T-cell (primary cell): ENCODE measurements at regions of chr11 and their contacts with region 1.

Region 1: DNA sequence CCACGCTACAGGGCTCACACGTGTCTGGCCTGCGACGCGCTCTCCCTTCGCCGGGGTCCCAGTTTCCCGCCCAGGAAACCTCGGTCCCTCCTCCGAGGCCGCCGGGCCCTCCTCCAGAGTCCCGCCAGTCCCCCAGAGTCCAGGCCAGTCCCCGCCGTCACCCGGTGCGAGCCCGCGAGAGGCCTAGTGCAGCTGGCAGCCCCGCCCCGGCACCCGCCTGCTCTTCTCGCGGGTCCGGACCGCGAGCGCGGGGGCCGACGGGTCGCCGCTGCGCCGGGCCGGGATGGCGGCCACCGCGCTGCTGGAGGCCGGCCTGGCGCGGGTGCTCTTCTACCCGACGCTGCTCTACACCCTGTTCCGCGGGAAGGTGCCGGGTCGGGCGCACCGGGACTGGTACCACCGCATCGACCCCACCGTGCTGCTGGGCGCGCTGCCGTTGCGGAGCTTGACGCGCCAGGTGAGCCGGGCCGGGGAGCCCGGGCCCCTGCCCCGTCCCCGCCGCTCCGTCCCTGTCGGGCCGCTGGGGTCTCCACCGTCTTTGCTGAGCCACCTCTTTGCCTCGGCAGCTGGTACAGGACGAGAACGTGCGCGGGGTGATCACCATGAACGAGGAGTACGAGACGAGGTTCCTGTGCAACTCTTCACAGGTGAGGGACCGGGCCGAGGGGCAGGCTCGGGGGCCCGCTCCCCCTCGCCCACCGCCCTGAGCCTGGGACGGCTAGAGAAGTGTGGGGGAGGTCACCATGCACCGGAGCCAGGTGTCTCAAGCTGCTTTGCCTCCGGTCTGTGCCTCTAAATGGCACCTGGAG is at the start of gene PTPMT1:
- DNase-seq: peak; percentile 12 to 71 (median 51)
- ATAC-seq: peak; percentile 87 to 93 (median 90)
- H3K4me3 ChIP-seq: peak within 1 kb of the TSS; percentile 83 to 91
- H3K4me3 Mint-ChIP-seq: peak within 1 kb of the TSS; percentile 77 to 83 (median 79)
- H3K27ac ChIP-seq: peak within 1 kb of the TSS; percentile 81
- H3K27ac Mint-ChIP-seq: peak within 1 kb of the TSS; percentile 76 to 85
- H3K4me1 ChIP-seq: peaks cover 4 to 24% of the 10 kb centered on the region in 2 experiments
- H3K4me1 Mint-ChIP-seq: peaks cover 8 to 24% (median 22%) of the 10 kb centered on the region in 3 donors
- H3K27me3 ChIP-seq: no peaks in the 10 kb centered on the region
- H3K27me3 Mint-ChIP-seq: no peaks in the 10 kb centered on the region
- total RNA-seq, gene PTPMT1: 14.9 to 25.3 (median 25.0) TPM

Region 2: DNA sequence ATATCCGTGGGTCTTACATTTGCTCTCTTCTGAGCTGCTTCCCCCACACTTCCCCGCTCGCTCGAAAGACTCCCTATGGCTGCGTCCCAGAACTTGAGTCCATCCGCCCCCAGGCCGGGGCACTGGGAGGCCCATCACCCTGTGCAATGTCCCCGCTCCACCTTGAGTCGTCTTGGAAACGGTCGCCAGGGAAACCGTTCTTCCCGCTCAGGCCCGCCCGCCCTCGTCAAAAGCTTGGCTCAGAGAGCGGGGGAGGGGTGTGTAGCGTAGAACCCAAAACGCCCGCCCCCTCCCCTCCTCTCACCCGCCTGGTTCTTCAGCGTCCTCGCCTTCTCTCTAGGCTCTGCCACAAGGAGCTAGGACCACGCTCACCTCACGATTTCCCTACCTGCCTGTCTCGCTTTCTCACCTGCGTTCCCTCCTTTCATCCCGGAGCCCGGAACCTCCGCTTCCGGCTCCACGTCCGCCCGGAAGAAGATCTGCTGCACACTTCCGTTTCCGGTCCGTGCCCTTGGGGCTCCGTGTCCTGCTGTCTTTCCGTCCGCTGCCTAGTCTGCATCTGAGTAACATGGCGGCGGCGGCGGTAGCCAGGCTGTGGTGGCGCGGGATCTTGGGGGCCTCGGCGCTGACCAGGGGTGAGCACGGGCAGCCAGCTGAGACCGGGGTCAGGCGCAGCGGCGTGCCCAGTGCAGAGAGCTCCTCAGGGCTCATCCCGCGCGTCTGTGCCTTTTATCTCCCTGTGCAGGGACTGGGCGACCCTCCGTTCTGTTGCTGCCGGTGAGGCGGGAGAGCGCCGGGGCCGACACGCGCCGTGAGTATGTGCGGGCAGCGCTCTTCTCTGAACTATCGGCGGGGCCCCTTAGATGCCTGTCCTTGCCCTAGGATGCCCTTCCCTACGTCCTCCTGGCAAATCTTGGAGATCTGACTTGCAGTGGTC is 13.2 kb after region 1 on chr11 and contains the starts of genes KBTBD4 and NDUFS3:
- CTCF ChIA-PET with region 1: interaction called, 3 to 11 read pairs
- POLR2A ChIA-PET with region 1: interaction called, 4 to 5 read pairs
- DNase-seq: peak; percentile 70 to 95 (median 83)
- ATAC-seq: peak; percentile 92 to 95 (median 94)
- H3K4me3 ChIP-seq: peak within 1 kb of the TSS; percentile 78 to 84
- H3K4me3 Mint-ChIP-seq: peak within 1 kb of the TSS; percentile 87 to 100 (median 100)
- H3K27ac ChIP-seq: peak within 1 kb of the TSS; percentile 77
- H3K27ac Mint-ChIP-seq: peak within 1 kb of the TSS; percentile 95 to 100
- H3K4me1 ChIP-seq: peaks cover 20 to 36% of the 10 kb centered on the region in 2 experiments
- H3K4me1 Mint-ChIP-seq: peaks cover 38 to 45% (median 44%) of the 10 kb centered on the region in 3 donors
- H3K27me3 ChIP-seq: no peaks in the 10 kb centered on the region
- H3K27me3 Mint-ChIP-seq: no peaks in the 10 kb centered on the region
- total RNA-seq, gene KBTBD4: 19.1 to 23.6 (median 21.6) TPM
- total RNA-seq, gene NDUFS3: 69.1 to 105 (median 76.1) TPM

Region 3: DNA sequence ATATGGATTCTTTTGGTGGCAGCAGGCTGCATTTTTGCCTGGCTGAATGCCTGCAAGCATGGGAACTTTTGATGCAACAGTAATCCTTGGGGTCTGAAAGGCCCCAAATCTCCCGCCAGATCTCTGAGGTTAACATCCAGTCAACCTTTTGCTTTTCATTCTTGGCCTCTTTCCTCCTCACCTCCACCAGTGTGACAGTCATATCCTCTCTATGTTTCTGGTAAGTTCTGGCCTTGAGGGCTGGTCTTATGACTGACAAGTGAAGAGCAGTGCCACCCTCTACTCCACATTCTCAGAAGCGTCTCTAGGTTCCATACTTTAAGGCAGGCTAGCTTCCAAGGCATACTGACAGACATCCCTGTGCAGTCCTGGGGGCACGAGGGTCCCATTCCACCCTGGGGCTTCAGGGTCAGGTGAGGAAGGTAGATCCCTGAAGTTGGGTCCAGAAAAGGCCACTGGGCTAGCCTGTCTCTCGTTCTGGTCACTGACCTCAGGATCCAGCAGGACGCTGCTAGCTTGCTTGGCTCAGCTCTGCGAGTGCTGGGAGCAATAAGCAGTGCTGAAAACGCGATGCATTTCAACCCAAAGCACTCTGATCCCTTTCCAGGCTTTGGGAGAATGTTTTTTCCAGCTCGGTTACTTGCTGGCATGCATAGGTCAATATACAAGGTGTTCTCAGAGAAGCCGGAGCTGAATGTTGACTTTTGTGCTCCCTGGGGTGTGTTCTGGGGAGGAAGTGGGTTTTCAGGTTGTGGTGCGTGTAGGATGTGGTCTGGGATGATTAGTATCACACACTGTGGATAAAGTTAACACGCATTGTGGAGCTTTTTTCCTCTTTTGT is 490.0 kb after region 1 on chr11:
- CTCF ChIA-PET with region 1: interaction called in 1 of 2 experiments, 13 read pairs
- POLR2A ChIA-PET with region 1: no interaction called
- DNase-seq: peak; percentile 34 to 83 (median 61)
- ATAC-seq: peak; percentile 78 to 90 (median 86)
- H3K4me3 ChIP-seq: peak overlapping the region; percentile 19 to 35
- H3K4me3 Mint-ChIP-seq: peak overlapping the region; percentile 64 to 78 (median 70)
- H3K27ac ChIP-seq: peak overlapping the region; percentile 62
- H3K27ac Mint-ChIP-seq: peak overlapping the region; percentile 74 to 83
- H3K4me1 ChIP-seq: peaks cover 57 to 82% of the 10 kb centered on the region in 2 experiments
- H3K4me1 Mint-ChIP-seq: peaks cover 88 to 89% (median 89%) of the 10 kb centered on the region in 3 donors
- H3K27me3 ChIP-seq: no peaks in the 10 kb centered on the region
- H3K27me3 Mint-ChIP-seq: no peaks in the 10 kb centered on the region